PC-9 (cell line): ENCODE measurements at regions of chr5 and their contacts with region 1.

Region 1: DNA sequence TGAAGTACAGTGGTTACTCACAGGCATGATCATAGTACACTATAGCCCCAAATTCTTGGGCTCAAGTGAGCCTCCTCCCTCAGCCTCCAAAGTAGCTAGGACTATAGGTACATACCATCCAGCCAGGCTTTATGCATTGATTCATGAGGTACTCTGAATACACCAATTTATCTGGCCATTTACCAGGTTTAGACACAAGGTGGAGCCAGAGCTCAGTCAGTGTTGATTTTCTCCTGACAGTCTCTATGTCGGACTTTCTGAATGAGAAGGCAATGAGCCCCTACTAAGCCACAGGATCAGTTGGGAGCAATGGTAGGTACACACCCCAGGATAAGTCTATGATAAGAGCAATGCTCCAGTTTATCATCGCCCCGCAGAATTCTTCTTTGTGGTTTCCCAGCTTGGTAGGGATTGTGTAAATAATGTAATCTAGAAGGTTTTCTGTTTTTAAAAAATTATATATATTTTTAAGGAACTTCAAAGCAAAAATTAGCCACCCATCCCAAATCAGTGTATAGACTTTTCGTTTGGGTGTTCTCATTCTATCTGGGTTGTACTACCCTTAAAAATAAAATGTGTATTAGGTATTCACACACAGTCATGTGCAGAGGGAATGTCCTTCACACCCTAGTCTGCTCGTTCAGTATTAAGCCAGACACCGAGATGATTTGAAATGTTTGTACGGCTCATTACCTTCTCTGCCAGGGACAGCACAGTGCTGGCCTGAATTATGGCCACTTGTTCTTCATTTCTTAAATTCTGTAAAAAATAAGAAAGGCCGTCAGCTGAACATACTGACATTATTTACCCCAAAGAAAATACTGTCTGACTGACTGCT is 118.4 kb upstream of the DPYSL3 start:
- DNase-seq: peak in 1 of 2 experiments; percentile 38
- H3K4me3 ChIP-seq: no peak overlapping the region
- H3K27ac ChIP-seq: no peak overlapping the region
- H3K4me1 ChIP-seq: no peaks in the 10 kb centered on the region
- H3K27me3 ChIP-seq: 0 out of 2 replicates have a peak, but pooled peaks cover 5% of the 10 kb centered on the region
- CTCF ChIP-seq: peak; percentile 80

Region 2: DNA sequence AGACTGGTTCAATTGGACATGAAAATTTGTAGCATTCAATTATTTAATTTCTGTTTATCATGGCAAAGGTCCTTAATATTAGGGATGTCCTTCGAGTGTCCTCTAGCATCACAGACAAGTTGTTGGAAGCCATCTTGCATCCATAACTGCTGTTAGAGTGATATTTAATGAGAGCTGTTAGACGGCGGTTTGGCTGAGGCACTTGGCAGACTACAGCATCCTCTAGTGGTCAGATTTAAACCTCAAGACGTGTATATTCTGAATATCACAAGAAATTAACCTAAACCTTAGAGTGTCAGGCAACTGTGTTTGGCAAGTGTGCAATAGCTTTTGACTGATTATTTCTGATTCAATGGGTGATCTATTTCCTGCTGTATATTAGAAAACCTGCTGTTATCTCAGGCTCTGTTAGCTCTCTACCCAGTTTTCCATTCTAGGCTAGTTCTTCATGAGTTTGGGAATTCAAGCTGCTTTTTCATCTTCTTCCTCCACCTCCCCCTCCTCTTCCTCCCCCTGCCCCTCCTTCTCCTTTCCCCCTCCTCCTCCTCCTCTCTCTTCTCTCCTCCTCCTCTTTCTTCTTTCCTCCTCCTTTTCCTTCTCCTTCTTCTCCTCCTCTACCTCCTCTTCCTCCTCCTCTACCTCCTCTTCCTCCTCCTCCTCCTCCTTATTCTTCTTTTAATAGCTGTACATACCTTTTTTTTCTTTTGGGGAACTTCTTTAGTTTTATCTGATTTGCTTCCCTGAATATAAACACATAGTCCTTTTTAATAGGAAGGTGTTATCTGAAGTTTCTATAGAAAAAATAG is 194.6 kb after region 1 on chr5:
- CTCF ChIA-PET with region 1: interaction called, 3 read pairs
- POLR2A ChIA-PET with region 1: no interaction called
- intact Hi-C with region 1: loop called (anchors 1 kb)
- DNase-seq: peak in 1 of 2 experiments; percentile 11
- H3K4me3 ChIP-seq: no peak overlapping the region
- H3K27ac ChIP-seq: no peak overlapping the region
- H3K4me1 ChIP-seq: no peaks in the 10 kb centered on the region
- H3K27me3 ChIP-seq: peaks cover 9% of the 10 kb centered on the region; the same call in 1 of the 2 replicates
- CTCF ChIP-seq: peak; percentile 83

Region 3: DNA sequence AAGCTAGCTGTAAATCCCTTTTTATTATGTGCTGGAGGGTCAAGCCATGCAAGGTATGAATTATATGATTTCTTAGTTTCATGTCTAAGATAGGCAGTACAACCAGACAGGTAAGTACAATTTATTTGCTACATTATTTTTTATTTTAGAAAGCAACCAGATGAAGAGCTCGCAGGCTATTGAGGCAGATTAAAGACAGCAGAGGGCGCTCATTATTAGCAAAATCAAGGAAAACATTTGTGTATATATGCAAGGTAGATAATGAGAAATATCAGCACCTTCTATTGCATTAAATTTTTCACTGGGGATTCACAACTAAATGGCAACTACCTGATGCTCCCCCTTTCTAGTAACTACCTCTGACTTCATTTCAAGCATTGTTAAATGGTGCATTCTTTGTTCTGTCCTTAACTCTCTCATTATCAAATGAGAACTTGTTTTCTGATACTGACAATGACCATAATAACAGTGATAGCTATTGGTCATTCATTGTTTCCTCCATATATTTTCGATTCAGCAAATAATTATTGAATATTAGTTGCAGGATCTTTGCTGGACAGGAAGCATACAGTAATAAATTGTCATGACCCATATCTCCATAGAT is 258.8 kb after region 1 on chr5:
- CTCF ChIA-PET with region 1: no interaction called
- POLR2A ChIA-PET with region 1: interaction called, 28 read pairs
- intact Hi-C with region 1: no loop called
- DNase-seq: peak; percentile 27 to 40
- H3K4me3 ChIP-seq: no peak overlapping the region
- H3K27ac ChIP-seq: no peak overlapping the region
- H3K4me1 ChIP-seq: peaks cover 26% of the 10 kb centered on the region
- H3K27me3 ChIP-seq: no peaks in the 10 kb centered on the region
- CTCF ChIP-seq: peak; percentile 82

Region 4: DNA sequence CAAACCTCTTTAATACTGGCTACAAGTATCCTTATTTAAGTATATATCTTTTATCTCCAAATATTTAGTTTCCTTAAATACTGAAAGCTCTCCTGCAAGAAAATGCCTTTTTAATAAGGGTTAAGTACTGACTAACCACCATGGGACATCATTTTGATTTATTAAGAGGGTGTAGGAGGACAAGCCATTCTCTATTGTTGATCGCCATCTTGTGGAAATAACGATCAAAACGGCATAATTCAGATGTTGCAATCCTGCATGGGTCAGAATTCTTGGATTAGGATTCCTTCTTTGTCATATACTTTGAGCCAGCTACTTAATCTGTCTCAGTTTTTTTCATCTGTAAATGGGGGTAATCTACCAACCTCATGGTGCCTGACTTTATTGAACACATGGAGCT is 306.8 kb after region 1 on chr5:
- CTCF ChIA-PET with region 1: no interaction called
- POLR2A ChIA-PET with region 1: no interaction called
- intact Hi-C with region 1: loop called (anchors 2 kb)
- DNase-seq: peak; percentile 26 to 54
- H3K4me3 ChIP-seq: no peak overlapping the region
- H3K27ac ChIP-seq: no peak overlapping the region
- H3K4me1 ChIP-seq: no peaks in the 10 kb centered on the region
- H3K27me3 ChIP-seq: no peaks in the 10 kb centered on the region
- CTCF ChIP-seq: peak; percentile 81